ENCODE measurements at regions of chr3 and their contacts with region 1.

Region 1: GRCh38 chr3:186259612-186260383 is 102.2 kb downstream of the DGKG start:
- DNase-seq: peak; percentile 90
- H3K4me3 ChIP-seq: peak overlapping the region in 1 of 2 experiments; percentile 17; a peak in 1 of 4 replicates
- H3K27ac ChIP-seq: peak overlapping the region in 1 of 2 experiments; percentile 55; a peak in 1 of 4 replicates
- H3K4me1 ChIP-seq: peaks cover 0 to 11% of the 10 kb centered on the region in 2 experiments; a peak in 1 of 4 replicates
- H3K27me3 ChIP-seq: no peaks in the 10 kb centered on the region; the same call in 1 of the 2 replicates
- CTCF ChIP-seq: peak; percentile 80
- EP300 ChIP-seq: no peak
- RAD21 ChIP-seq: peak; percentile 88

Region 2: GRCh38 chr3:185976977-185977678 is 282.7 kb before region 1 on chr3:
- CTCF ChIA-PET with region 1: interaction called, 24 read pairs
- POLR2A ChIA-PET with region 1: no interaction called
- DNase-seq: peak; percentile 70
- H3K4me3 ChIP-seq: no peak overlapping the region; a peak in 1 of 4 replicates
- H3K27ac ChIP-seq: no peak overlapping the region
- H3K4me1 ChIP-seq: no peaks in the 10 kb centered on the region
- H3K27me3 ChIP-seq: no peaks in the 10 kb centered on the region
- CTCF ChIP-seq: peak; percentile 96
- EP300 ChIP-seq: no peak
- RAD21 ChIP-seq: peak; percentile 73

Region 3: DNA sequence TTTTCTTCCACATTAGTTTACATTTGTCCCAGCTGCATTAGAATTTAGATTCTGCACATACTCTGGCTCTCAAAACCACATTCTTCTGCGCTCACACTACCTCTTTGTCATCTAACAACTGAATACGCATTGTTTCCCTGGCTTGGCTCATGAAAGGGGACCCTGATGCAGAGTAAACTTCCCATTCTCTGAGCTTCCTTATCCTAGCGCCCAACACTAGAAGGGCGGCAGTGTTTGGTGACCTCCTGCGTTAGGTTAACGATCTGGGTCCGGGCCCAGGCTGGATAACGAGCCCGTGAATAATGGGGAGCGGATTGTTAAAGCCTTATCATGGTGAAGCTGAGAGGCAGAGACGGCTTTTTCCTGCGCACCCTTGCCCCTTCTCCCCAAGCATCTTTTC is 214.8 kb before region 1 on chr3:
- CTCF ChIA-PET with region 1: interaction called, 10 read pairs
- POLR2A ChIA-PET with region 1: no interaction called
- DNase-seq: no peak
- H3K4me3 ChIP-seq: no peak overlapping the region
- H3K27ac ChIP-seq: no peak overlapping the region
- H3K4me1 ChIP-seq: no peaks in the 10 kb centered on the region
- H3K27me3 ChIP-seq: no peaks in the 10 kb centered on the region
- CTCF ChIP-seq: no peak
- EP300 ChIP-seq: no peak
- RAD21 ChIP-seq: no peak

Region 4: GRCh38 chr3:186246941-186247340 is 12.9 kb before region 1 on chr3:
- CTCF ChIA-PET with region 1: interaction called, 10 read pairs
- POLR2A ChIA-PET with region 1: no interaction called
- DNase-seq: no peak
- H3K4me3 ChIP-seq: no peak overlapping the region
- H3K27ac ChIP-seq: no peak overlapping the region
- H3K4me1 ChIP-seq: peaks cover 4 to 5% of the 10 kb centered on the region in 2 experiments; a peak in 2 of 4 replicates
- H3K27me3 ChIP-seq: no peaks in the 10 kb centered on the region; the same call in 1 of the 2 replicates
- CTCF ChIP-seq: no peak
- EP300 ChIP-seq: no peak
- RAD21 ChIP-seq: no peak

Region 5: GRCh38 chr3:186307594-186308221 is 47.9 kb after region 1 on chr3:
- CTCF ChIA-PET with region 1: interaction called, 10 read pairs
- POLR2A ChIA-PET with region 1: no interaction called
- DNase-seq: no peak
- H3K4me3 ChIP-seq: no peak overlapping the region
- H3K27ac ChIP-seq: peak overlapping the region in 1 of 2 experiments; percentile 83; a peak in 3 of 4 replicates
- H3K4me1 ChIP-seq: peaks cover 0 to 2% of the 10 kb centered on the region in 2 experiments; a peak in 2 of 4 replicates
- H3K27me3 ChIP-seq: 0 out of 2 replicates have a peak, but pooled peaks cover 12% of the 10 kb centered on the region
- CTCF ChIP-seq: no peak
- EP300 ChIP-seq: no peak
- RAD21 ChIP-seq: no peak

Measured in SK-N-SH (cell line).